MCF 10A (cell line): ENCODE measurements at regions of chr18 and their contacts with region 1.

Region 1: DNA sequence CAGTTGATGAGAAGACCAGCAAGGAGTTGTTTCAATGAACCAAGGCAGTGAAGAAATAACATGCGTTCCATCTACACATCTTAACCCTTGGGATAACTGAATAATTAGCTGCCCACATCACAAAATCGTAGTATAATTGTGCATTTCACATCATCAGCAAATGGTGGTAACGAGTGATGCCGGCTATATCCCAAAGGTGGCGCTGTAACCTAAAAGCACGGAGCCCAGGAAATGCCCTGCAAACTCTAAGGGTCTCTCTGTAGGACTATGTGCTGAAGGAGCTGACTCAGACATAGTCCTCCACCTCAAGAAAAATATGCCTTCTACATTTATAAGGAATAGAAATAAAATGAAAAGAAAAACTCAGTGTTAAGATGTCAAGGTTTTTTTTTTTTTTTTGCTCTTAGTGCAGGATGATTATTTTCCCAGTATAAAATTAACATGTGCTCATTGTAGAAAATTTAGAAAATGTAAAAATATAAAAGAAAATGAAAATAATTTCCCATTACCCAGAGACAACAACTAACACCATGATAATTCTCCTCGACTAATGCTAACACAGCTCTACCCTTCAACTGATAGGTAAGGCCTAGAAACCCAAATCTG is 23.1 kb upstream of the DSG3 start:
- DNase-seq: peak; percentile 67
- H3K4me3 Mint-ChIP-seq: no peak overlapping the region
- H3K27ac Mint-ChIP-seq: no peak overlapping the region
- H3K4me1 Mint-ChIP-seq: peaks cover 24% of the 10 kb centered on the region
- H3K27me3 Mint-ChIP-seq: no peaks in the 10 kb centered on the region
- CTCF ChIP-seq: peak; percentile 83

Region 2: GRCh38 chr18:30886998-30887397 is 537.5 kb before region 1 on chr18:
- CTCF ChIA-PET with region 1: no interaction called
- POLR2A ChIA-PET with region 1: no interaction called
- intact Hi-C with region 1: no loop called
- DNase-seq: no peak
- H3K4me3 Mint-ChIP-seq: no peak overlapping the region
- H3K27ac Mint-ChIP-seq: no peak overlapping the region
- H3K4me1 Mint-ChIP-seq: no peaks in the 10 kb centered on the region
- H3K27me3 Mint-ChIP-seq: peaks cover 63% of the 10 kb centered on the region
- CTCF ChIP-seq: no peak

Region 3: GRCh38 chr18:30999186-30999585 is 425.3 kb before region 1 on chr18:
- CTCF ChIA-PET with region 1: no interaction called
- POLR2A ChIA-PET with region 1: no interaction called
- intact Hi-C with region 1: loop called (anchors 10 kb)
- DNase-seq: no peak
- H3K4me3 Mint-ChIP-seq: no peak overlapping the region
- H3K27ac Mint-ChIP-seq: no peak overlapping the region
- H3K4me1 Mint-ChIP-seq: no peaks in the 10 kb centered on the region
- H3K27me3 Mint-ChIP-seq: no peaks in the 10 kb centered on the region
- CTCF ChIP-seq: peak; percentile 36

Region 4: GRCh38 chr18:31156821-31157777 is 267.4 kb before region 1 on chr18:
- CTCF ChIA-PET with region 1: no interaction called
- POLR2A ChIA-PET with region 1: no interaction called
- intact Hi-C with region 1: no loop called
- DNase-seq: no peak
- H3K4me3 Mint-ChIP-seq: no peak overlapping the region
- H3K27ac Mint-ChIP-seq: no peak overlapping the region
- H3K4me1 Mint-ChIP-seq: peaks cover 7% of the 10 kb centered on the region
- H3K27me3 Mint-ChIP-seq: no peaks in the 10 kb centered on the region
- CTCF ChIP-seq: no peak

Region 5: GRCh38 chr18:31274915-31275314 is 149.6 kb before region 1 on chr18:
- CTCF ChIA-PET with region 1: interaction called, 12 read pairs
- POLR2A ChIA-PET with region 1: interaction called, 29 read pairs
- intact Hi-C with region 1: no loop called
- DNase-seq: peak; percentile 99
- H3K4me3 Mint-ChIP-seq: peak overlapping the region; percentile 59
- H3K27ac Mint-ChIP-seq: peak overlapping the region; percentile 97
- H3K4me1 Mint-ChIP-seq: peaks cover 34% of the 10 kb centered on the region
- H3K27me3 Mint-ChIP-seq: no peaks in the 10 kb centered on the region
- CTCF ChIP-seq: no peak

Region 6: GRCh38 chr18:31447530-31448191 is 23.2 kb after region 1 on chr18 and contains the start of gene DSG3:
- CTCF ChIA-PET with region 1: interaction called, 13 read pairs
- POLR2A ChIA-PET with region 1: interaction called, 219 read pairs
- intact Hi-C with region 1: loop called (anchors 2 kb)
- DNase-seq: peak; percentile 94
- H3K4me3 Mint-ChIP-seq: peak within 1 kb of the TSS; percentile 75
- H3K27ac Mint-ChIP-seq: peak within 1 kb of the TSS; percentile 88
- H3K4me1 Mint-ChIP-seq: peaks cover 9% of the 10 kb centered on the region
- H3K27me3 Mint-ChIP-seq: no peaks in the 10 kb centered on the region
- CTCF ChIP-seq: no peak
- total RNA-seq, gene DSG3: 65.4 and 68.5 TPM in 2 replicates

Region 7: DNA sequence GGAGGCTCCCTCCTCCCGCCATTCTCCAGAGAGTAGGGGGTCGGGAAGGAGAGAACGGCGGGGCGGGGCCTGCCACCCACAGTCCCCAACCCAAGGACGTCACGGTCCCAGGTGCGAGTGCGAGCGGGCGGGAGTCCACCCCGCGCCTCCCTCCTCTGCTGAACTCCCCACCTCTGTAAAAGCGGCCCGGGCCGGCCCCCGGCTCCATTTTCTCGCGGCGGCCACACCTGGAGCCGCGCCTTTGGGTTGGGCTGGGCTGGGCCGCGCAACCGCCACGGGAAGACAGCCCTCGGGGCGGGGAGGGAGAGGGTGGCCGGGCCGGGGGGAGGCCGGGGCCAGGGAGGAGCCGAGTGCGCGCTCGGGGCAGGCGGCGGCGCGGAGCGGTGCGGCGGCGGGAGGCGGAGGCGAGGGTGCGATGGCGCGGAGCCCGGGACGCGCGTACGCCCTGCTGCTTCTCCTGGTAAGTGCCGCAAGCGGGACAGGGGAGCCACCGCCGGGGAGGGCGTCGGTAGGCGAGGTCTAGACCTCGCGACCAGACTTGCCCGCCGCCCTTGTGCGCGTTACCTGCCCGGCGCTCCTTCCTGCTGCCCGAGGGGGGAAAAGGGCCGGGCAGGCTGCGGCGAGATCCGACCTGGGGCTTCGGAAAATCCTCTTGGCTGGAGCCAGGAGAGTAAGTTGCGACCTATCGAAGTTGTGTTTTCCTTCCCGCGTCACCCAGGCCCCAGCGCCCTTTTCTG is 73.5 kb after region 1 on chr18 and contains the start of gene DSG2:
- CTCF ChIA-PET with region 1: interaction called, 19 read pairs
- POLR2A ChIA-PET with region 1: interaction called, 6 read pairs
- intact Hi-C with region 1: no loop called
- DNase-seq: peak; percentile 83
- H3K4me3 Mint-ChIP-seq: peak within 1 kb of the TSS; percentile 87
- H3K27ac Mint-ChIP-seq: peak within 1 kb of the TSS; percentile 66
- H3K4me1 Mint-ChIP-seq: peaks cover 19% of the 10 kb centered on the region
- H3K27me3 Mint-ChIP-seq: no peaks in the 10 kb centered on the region
- CTCF ChIP-seq: no peak
- total RNA-seq, gene DSG2: 106 and 134 TPM in 2 replicates

Region 8: DNA sequence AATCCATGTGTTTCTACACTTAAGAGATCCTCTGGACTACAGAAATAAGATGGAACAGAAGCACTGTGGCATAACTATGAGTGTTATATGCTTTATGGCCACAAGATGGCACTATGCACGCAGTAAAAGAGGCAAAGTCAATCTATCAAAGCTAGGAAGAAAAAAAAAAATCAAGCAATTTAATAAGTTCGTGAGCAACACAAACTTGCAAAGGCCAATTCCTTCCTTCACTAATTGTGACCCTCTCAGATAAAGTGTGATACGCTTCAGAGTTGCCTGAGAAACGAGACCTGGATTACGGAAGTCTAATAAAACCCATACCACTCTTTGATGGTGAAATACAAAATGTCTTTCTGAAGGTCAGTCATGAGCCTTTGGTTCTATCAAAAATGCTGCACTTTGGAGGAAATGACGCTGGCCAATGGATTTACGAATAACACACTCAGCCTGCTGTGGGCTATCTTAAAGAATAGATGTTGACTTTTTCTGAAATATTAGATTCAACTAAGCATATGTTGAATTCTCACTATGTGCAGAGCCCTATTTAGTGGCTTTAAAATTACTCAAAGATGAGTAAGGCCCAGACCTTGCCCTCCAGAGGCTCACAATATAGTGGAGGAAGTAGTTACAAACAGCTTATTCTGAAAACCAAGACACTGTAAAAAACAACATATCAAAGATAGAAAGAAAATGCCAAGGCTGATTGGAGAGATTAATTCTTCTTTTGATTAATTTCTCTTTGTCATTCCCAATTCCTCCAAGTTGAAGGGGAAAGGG is 131.7 kb after region 1 on chr18:
- CTCF ChIA-PET with region 1: interaction called, 3 read pairs
- POLR2A ChIA-PET with region 1: no interaction called
- intact Hi-C with region 1: loop called (anchors 2 kb)
- DNase-seq: peak; percentile 77
- H3K4me3 Mint-ChIP-seq: no peak overlapping the region
- H3K27ac Mint-ChIP-seq: no peak overlapping the region
- H3K4me1 Mint-ChIP-seq: peaks cover 6% of the 10 kb centered on the region
- H3K27me3 Mint-ChIP-seq: no peaks in the 10 kb centered on the region
- CTCF ChIP-seq: peak; percentile 76

Region 9: DNA sequence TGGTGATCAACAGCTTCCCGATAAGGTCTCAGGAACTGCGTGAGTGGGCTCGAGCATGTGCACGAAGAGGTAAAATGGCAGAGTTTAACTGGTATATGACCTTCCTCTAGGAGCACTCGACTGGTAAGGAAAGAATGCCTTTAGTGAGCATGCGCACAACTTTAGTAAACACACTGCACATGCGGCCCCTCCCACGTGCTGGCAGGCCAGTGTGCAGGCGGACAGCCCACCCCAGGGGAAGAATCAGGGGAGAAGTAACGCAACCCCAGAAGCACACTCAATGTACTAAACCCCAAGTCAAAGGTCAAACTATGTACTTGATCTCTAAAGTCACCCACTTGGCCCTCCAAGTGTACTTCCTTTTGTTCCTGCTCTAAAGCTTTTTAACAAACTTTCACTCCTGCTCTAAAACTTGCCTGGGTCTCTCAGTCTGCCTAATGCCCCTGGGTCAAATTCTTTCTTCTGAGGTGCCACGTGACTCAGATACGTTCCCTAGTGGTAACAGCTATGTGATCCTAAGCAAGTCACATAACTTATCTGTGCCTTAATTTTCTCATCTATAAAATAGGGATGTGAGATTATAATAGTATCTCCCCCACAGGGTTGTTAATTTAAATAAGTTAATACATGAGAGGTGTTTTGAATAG is 365.0 kb after region 1 on chr18:
- CTCF ChIA-PET with region 1: no interaction called
- POLR2A ChIA-PET with region 1: no interaction called
- intact Hi-C with region 1: no loop called
- DNase-seq: no peak
- H3K4me3 Mint-ChIP-seq: no peak overlapping the region
- H3K27ac Mint-ChIP-seq: no peak overlapping the region
- H3K4me1 Mint-ChIP-seq: no peaks in the 10 kb centered on the region
- H3K27me3 Mint-ChIP-seq: no peaks in the 10 kb centered on the region
- CTCF ChIP-seq: no peak

Region 10: GRCh38 chr18:32086861-32087260 is 662.4 kb after region 1 on chr18:
- CTCF ChIA-PET with region 1: no interaction called
- POLR2A ChIA-PET with region 1: no interaction called
- intact Hi-C with region 1: no loop called
- DNase-seq: peak; percentile 23
- H3K4me3 Mint-ChIP-seq: no peak overlapping the region
- H3K27ac Mint-ChIP-seq: no peak overlapping the region
- H3K4me1 Mint-ChIP-seq: peaks cover 8% of the 10 kb centered on the region
- H3K27me3 Mint-ChIP-seq: no peaks in the 10 kb centered on the region
- CTCF ChIP-seq: no peak